Right ventricle myocardium inferior (tissue), 1 donor: ENCODE measurements at regions of chr1 and their contacts with region 1.

Region 1: GRCh38 chr1:200620273-200621131 is at the start of gene KIF14:
- DNase-seq: peak; percentile 97
- ATAC-seq: peak; percentile 99
- total RNA-seq, gene KIF14: 0.11 TPM

Region 2: DNA sequence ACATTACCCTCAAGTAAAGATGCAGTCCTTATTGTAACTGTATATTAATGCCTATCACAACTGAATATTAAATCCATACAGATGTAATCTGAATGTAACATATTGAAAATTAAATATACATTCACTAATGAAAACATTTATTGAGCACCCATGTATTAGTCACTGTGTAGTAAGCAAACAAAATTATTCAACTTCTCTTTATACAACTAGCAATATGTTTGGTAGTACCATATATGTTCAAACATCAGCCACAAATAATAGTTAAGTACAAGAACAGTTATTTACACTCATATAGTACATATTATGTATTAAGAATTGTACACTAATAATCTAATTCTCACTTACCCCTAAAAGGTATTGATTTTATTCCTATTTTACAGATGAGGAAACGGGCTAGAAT is 17.9 kb before region 1 on chr1:
- intact Hi-C with region 1: no loop called
- DNase-seq: no peak
- ATAC-seq: no peak

Region 3: DNA sequence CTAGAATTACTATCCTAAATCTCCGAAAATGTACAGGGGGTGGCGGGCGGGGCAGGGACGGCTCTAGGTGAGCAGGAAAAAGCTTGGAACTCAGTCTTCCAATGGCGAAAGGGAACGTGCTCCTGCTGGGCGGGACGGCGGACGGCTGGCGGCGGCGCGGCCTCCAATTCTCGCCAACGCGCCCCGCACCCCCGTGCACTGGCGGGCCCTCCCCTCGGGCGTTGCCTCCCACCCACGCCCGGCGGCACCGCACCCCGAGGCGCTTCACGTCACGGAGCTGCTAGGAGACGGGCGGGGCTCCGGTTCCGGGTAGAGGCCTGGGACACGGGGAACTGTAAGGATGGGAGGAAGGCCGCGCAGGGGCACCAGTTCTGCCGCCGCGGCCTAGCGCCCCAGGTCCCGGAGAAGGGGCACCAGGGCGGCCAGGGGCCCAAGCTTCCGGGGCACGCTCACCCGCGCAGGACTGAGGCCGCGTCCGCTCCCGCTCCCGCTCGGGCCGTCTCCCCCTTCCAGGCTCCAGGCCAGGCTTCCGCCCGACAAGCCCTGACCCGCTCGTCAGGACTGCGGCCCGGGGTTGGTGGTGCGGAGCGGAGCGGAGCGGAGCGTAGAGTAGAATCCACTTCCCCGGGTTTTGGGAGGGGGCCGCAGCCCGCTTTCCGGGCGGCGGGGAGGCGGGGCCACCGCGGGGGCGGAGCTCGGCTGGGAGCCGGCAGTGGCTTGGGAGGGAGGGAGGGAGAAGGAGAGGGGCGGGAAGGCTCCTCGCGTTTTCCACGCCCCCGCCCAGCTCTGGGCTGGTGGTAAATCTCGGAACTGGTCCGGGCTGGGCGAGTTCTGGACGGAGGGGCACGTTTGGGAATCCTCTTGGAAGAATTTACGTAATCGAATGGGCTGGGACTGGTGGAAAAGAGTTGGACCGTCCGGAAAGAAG is 49.1 kb after region 1 on chr1 and contains the start of gene DDX59:
- intact Hi-C with region 1: loop called (anchors 2 kb)
- DNase-seq: peak; percentile 98
- ATAC-seq: peak; percentile 95
- total RNA-seq, gene DDX59: 12.7 TPM

Region 4: DNA sequence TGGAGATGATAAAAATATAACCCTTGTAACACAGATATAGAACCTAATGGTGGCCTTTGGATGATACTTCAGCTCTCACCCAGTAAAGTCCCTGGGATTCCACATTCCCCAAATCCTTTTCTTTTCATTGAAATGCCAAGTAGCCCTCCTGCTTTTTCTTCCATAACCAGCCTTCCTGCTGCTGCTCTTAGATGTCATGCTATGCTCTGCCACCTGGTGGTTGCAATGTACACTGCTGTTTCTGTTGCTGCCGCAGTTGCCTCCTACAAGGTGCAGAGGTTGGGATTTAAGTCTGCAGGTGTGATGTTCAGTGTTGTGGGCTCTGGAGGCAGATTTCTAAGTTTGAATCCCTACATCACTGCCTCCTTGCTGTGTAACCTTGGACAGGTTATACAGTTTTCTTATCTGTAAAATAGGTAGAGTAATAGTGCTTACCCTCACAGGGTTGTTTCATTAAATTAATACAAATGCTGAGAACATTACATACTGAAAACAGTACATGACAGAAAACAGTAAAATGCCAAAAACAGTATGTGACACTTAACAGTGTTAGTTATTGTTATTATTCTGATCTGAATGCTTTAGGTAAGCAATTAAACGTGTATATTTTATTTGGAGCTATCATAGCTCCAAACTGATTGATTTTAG is 182.5 kb after region 1 on chr1:
- intact Hi-C with region 1: loop called (anchors 1 kb)
- DNase-seq: peak; percentile 72
- ATAC-seq: peak; percentile 76

Region 5: DNA sequence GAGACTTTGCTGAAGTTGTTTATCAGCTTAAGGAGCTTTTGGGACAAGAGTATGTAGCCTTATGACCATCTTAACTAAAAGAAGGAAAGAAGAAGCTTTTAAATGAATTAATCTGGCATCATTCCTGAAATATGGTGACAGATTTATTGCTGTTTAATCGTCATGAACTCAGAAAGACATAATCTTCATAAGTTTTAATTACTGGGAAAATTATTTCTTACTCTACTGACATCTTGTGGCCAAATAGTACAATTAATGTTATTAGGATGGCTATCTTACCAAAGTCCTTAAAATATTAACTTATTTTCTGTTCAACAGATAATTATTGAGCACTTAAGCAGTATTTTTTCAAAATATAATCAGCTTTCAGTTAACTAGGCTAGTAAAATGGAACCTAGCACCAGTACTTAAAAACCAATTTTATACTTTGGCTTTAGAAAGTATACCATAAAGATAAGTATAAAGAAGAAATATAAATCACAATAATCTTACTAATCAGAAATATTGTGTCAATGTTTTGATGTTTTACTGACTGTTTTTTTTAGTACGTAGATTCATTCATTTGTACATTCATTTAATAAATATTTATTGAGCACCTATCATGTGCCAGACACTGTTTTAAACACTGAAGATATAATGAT is 217.5 kb after region 1 on chr1:
- intact Hi-C with region 1: loop called (anchors 5 kb)
- DNase-seq: no peak
- ATAC-seq: no peak